ENCODE measurements at regions of chr1 and their contacts with region 1.

Region 1: GRCh38 chr1:115112496-115113375 is 23.4 kb upstream of the TSPAN2 start:
- DNase-seq: peak in 30 of 35 experiments; percentile 14 to 68 (median 46)
- ATAC-seq: peak; percentile 46 to 55 (median 53)
- H3K4me3 ChIP-seq: no peak overlapping the region
- H3K4me3 Mint-ChIP-seq: no peak overlapping the region
- H3K27ac ChIP-seq: no peak overlapping the region
- H3K27ac Mint-ChIP-seq: no peak overlapping the region
- H3K4me1 ChIP-seq: peaks cover 3 to 9% of the 10 kb centered on the region in 2 experiments
- H3K4me1 Mint-ChIP-seq: peaks cover 12 to 19% (median 15%) of the 10 kb centered on the region in 3 donors
- H3K27me3 ChIP-seq: no peaks in the 10 kb centered on the region
- H3K27me3 Mint-ChIP-seq: peaks cover 0 to 1% of the 10 kb centered on the region in 2 donors

Region 2: DNA sequence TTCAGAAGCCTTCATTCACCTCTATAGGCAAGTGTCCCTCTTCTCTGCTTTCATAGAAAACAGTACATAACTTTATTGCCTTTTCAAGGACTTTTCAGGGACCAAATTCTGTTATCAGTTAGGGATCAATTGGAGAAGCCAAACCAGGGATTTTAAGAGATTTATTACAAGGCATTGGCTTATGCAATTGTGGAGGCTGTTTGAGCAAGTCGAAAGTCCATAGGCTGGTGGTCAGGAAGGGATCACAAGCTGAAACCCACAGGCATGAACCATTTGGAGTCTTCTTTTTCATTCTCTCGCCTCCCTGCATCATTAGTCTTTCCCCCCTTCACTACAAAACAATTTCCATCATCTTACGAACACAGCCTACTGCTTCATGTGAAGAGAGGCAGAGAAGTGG is 292.9 kb before region 1 on chr1:
- CTCF ChIA-PET with region 1: no interaction called
- POLR2A ChIA-PET with region 1: no interaction called
- DNase-seq: no peak
- ATAC-seq: no peak
- H3K4me3 ChIP-seq: no peak overlapping the region
- H3K4me3 Mint-ChIP-seq: no peak overlapping the region
- H3K27ac ChIP-seq: no peak overlapping the region
- H3K27ac Mint-ChIP-seq: no peak overlapping the region
- H3K4me1 ChIP-seq: no peaks in the 10 kb centered on the region
- H3K4me1 Mint-ChIP-seq: no peaks in the 10 kb centered on the region
- H3K27me3 ChIP-seq: peaks cover 0 to 5% of the 10 kb centered on the region in 2 experiments
- H3K27me3 Mint-ChIP-seq: peaks cover 8 to 24% of the 10 kb centered on the region in 2 donors

Region 3: DNA sequence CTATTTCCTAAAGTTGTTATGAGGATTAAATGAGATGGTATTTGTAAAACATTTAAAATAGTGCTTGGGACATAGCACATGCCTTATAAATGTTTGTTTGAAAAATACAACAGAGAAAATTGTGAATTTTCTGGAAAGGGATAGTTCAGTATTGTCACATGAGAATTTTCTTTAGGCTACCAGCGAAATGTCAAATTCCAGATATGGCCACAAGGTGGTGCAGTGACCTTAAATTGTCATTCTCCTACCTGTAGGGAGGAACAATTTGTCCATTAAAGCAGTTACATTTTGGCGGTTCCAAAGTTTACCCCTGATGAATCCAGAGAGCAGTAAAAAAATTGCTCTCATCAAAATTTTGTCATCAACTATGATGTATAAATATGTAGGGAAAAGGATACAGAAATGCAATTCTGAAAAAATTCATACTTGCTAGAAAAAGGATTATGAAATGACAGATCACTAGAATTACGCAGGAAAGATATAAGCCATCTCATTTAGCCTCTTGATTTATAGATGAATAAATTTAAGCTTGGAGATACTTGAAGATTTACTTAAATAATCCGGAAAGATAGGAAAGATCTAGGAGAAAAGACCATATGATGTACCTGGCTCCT is 133.4 kb before region 1 on chr1:
- CTCF ChIA-PET with region 1: interaction called, 8 to 26 read pairs
- POLR2A ChIA-PET with region 1: no interaction called
- DNase-seq: peak; percentile 14 to 85 (median 59)
- ATAC-seq: no peak
- H3K4me3 ChIP-seq: no peak overlapping the region
- H3K4me3 Mint-ChIP-seq: no peak overlapping the region
- H3K27ac ChIP-seq: no peak overlapping the region
- H3K27ac Mint-ChIP-seq: no peak overlapping the region
- H3K4me1 ChIP-seq: no peaks in the 10 kb centered on the region
- H3K4me1 Mint-ChIP-seq: peaks cover 0 to 3% (median 2%) of the 10 kb centered on the region in 3 donors
- H3K27me3 ChIP-seq: peaks cover 0 to 3% of the 10 kb centered on the region in 2 experiments
- H3K27me3 Mint-ChIP-seq: peaks cover 18 to 22% of the 10 kb centered on the region in 2 donors